CD14-positive monocyte (primary cell): ENCODE measurements at regions of chr16 and their contacts with region 1.

Region 1: DNA sequence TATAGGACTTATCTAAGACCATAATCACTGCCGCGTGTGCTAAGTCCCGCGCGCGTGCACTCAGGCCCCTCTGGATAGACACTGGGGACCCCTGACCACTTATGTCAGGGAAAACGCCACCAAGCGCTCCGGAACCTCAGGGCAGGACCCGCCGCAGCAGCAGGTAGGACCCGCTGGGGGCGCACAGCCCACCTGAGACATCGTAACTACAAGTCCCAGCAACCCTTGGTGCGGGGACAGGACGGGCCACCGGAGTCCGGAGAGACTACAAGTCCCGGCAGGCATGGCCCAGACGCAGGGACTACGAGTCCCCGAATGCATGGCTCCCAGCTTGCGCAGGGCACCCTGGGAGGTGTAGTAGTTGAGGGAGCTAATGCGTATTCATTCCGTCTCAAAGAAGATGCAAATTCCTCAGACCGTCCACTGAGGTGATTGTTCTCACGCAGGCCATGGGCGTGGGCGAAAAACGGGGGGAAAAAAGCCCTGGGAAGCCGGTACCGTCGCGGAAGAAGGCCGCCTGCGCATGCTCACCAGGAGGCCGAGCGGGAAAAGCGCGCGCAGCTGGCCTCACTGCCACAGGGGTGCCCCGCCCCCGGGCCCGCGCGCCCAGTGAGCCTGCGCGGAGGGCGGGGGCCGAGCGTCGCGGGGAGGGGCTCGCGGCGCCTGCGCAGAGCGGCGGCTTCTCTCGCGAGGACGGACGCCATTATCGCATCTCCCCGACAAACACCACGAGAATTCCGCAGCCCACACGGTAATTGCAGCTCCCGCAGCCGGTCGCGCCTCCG is at the start of gene BANP:
- DNase-seq: peak; percentile 97
- H3K4me3 ChIP-seq: peak within 1 kb of the TSS; percentile 79 to 94 (median 90)
- H3K4me3 Mint-ChIP-seq: peak within 1 kb of the TSS; percentile 84 to 94
- H3K27ac ChIP-seq: peak within 1 kb of the TSS; percentile 97 to 99
- H3K27ac Mint-ChIP-seq: peak within 1 kb of the TSS; percentile 97 to 100 (median 99)
- H3K4me1 ChIP-seq: peaks cover 68 to 80% of the 10 kb centered on the region in 2 donors
- H3K4me1 Mint-ChIP-seq: peaks cover 68% of the 10 kb centered on the region
- H3K27me3 ChIP-seq: no peaks in the 10 kb centered on the region
- H3K27me3 Mint-ChIP-seq: peaks cover 0 to 5% (median 0%) of the 10 kb centered on the region in 3 donors
- CTCF ChIP-seq: no peak
- polyA plus RNA-seq, gene BANP: 10.1 to 40.9 (median 11.7) TPM

Region 2: DNA sequence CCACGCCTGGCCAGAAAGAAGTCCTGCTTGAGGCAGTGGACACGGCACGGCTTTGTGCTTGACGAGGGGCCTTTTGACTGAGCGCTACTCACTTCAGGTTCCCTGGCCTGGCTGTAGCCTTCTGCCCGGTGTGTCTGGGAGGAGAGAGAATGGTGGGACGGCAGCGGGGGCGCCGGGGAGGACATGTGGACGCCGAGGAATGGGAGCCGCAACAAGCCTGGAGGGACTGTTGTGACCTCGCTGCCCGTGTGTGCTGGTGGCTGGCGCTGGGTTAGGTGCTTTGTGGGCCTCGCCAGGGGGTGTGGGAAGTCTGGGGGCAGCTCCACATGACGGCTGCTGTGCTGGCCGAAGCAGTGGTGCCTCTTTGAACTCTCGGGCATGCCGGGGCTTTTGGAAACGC is 33.9 kb after region 1 on chr16:
- intact Hi-C with region 1: loop called in 1 of 2 experiments (anchors 5 kb)
- DNase-seq: no peak
- H3K4me3 ChIP-seq: no peak overlapping the region
- H3K4me3 Mint-ChIP-seq: peak overlapping the region in 1 of 2 donors; percentile 32
- H3K27ac ChIP-seq: no peak overlapping the region
- H3K27ac Mint-ChIP-seq: peak overlapping the region in 5 of 7 donors; percentile 25 to 89 (median 69)
- H3K4me1 ChIP-seq: no peaks in the 10 kb centered on the region
- H3K4me1 Mint-ChIP-seq: peaks cover 10% of the 10 kb centered on the region
- H3K27me3 ChIP-seq: no peaks in the 10 kb centered on the region
- H3K27me3 Mint-ChIP-seq: no peaks in the 10 kb centered on the region
- CTCF ChIP-seq: no peak